Breast epithelium (tissue), 4 donors: ENCODE measurements at regions of chrX and their contacts with region 1.

Region 1: DNA sequence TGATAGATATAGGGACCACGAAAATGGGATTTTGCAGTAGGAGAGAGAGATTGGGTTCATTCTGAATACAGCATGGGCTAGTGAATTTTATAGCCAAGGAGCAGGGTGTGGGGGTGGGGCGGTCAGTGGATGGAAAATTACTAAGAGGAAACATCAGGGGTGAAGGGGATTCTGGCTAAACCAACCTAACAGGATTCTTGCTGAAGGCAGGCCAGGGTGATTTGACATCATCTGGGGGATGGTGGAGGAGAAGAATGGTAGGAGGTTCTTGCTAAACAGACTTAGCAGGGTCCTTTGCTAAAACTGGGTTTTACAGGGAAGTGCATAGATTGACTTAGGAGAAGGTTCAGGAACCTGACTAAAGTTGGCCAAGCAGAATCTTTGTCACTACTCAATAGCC is 91.9 kb downstream of the DNAAF6 start:
- DNase-seq: no peak
- H3K4me3 ChIP-seq: no peak overlapping the region
- H3K27ac ChIP-seq: no peak overlapping the region
- H3K4me1 ChIP-seq: no peaks in the 10 kb centered on the region
- H3K27me3 ChIP-seq: peaks cover 0 to 54% of the 10 kb centered on the region in 2 donors
- CTCF ChIP-seq: no peak
- POLR2A ChIP-seq: no peak

Region 2: GRCh38 chrX:107355533-107355932 is 57.3 kb after region 1 on chrX:
- intact Hi-C with region 1: loop called (anchors 5 kb)
- DNase-seq: no peak
- H3K4me3 ChIP-seq: no peak overlapping the region
- H3K27ac ChIP-seq: no peak overlapping the region
- H3K4me1 ChIP-seq: no peaks in the 10 kb centered on the region
- H3K27me3 ChIP-seq: peaks cover 0 to 67% of the 10 kb centered on the region in 2 donors
- CTCF ChIP-seq: no peak
- POLR2A ChIP-seq: no peak

Region 3: GRCh38 chrX:107654872-107655761 is 356.9 kb after region 1 on chrX:
- intact Hi-C with region 1: no loop called
- DNase-seq: peak in 1 of 2 donors; percentile 40
- H3K4me3 ChIP-seq: peak overlapping the region in 1 of 3 donors; percentile 38
- H3K27ac ChIP-seq: peak overlapping the region in 1 of 2 donors; percentile 50
- H3K4me1 ChIP-seq: no peaks in the 10 kb centered on the region
- H3K27me3 ChIP-seq: peaks cover 0 to 32% of the 10 kb centered on the region in 2 donors
- CTCF ChIP-seq: peak in 2 of 3 donors; percentile 40 to 42
- POLR2A ChIP-seq: no peak